ENCODE measurements at regions of chr22 and their contacts with region 1.

Region 1: GRCh38 chr22:40728731-40729189 is 49.5 kb downstream of the MCHR1 start:
- DNase-seq: peak; percentile 58 to 86 (median 70)
- ATAC-seq: peak; percentile 61
- H3K4me3 ChIP-seq: no peak overlapping the region
- H3K4me3 Mint-ChIP-seq: peak overlapping the region; percentile 73
- H3K27ac ChIP-seq: peak overlapping the region; percentile 64 to 71
- H3K27ac Mint-ChIP-seq: peak overlapping the region; percentile 93
- H3K4me1 ChIP-seq: peaks cover 72% of the 10 kb centered on the region
- H3K4me1 Mint-ChIP-seq: peaks cover 64% of the 10 kb centered on the region
- H3K27me3 ChIP-seq: no peaks in the 10 kb centered on the region
- H3K27me3 Mint-ChIP-seq: no peaks in the 10 kb centered on the region
- CTCF ChIP-seq: no peak

Region 2: DNA sequence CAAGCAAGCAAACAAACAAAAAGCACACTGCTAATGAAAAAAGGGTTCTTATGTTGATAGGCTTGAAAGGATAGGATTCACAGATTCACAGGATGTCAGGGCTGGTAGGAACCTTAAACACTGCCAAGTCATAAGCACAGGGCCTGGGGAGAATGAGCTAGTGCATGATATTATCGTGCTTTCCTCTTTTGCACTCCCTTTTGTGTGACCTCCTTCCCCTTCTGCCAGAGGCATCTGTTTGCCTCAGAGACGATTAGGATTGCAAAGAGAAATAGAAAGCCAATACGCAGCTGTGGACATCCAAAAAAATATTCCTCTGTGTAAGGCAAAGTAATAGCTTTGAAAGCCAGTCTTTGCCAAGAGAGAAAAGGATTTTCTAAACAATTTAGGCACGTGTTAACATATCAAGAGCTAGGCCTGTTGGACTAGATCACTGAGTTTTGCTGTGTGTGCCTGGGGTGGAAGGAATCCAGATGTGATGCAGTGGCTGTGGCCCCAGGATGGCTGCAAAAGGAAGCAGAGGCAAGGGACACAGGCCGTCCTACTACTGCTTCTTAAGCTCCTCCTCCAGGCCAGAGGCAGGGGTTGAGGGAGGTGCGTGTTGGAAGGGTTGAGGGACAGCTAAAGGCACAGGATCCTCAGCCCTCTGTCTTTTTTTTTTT is 18.9 kb before region 1 on chr22:
- CTCF ChIA-PET with region 1: interaction called, 5 read pairs
- POLR2A ChIA-PET with region 1: interaction called, 7 read pairs
- intact Hi-C with region 1: loop called in 1 of 2 experiments (anchors 2 kb)
- DNase-seq: no peak
- ATAC-seq: no peak
- H3K4me3 ChIP-seq: no peak overlapping the region
- H3K4me3 Mint-ChIP-seq: no peak overlapping the region
- H3K27ac ChIP-seq: no peak overlapping the region
- H3K27ac Mint-ChIP-seq: no peak overlapping the region
- H3K4me1 ChIP-seq: peaks cover 15% of the 10 kb centered on the region
- H3K4me1 Mint-ChIP-seq: peaks cover 16% of the 10 kb centered on the region
- H3K27me3 ChIP-seq: no peaks in the 10 kb centered on the region
- H3K27me3 Mint-ChIP-seq: no peaks in the 10 kb centered on the region
- CTCF ChIP-seq: no peak

Region 3: GRCh38 chr22:40764763-40765441 is 36.1 kb after region 1 on chr22:
- CTCF ChIA-PET with region 1: no interaction called
- POLR2A ChIA-PET with region 1: interaction called, 13 read pairs
- intact Hi-C with region 1: loop called in 1 of 2 experiments (anchors 5 kb)
- DNase-seq: peak in 10 of 14 experiments; percentile 5 to 65 (median 26)
- ATAC-seq: peak; percentile 81
- H3K4me3 ChIP-seq: no peak overlapping the region
- H3K4me3 Mint-ChIP-seq: peak overlapping the region; percentile 25
- H3K27ac ChIP-seq: peak overlapping the region; percentile 57 to 69
- H3K27ac Mint-ChIP-seq: peak overlapping the region; percentile 84
- H3K4me1 ChIP-seq: peaks cover 19% of the 10 kb centered on the region
- H3K4me1 Mint-ChIP-seq: peaks cover 23% of the 10 kb centered on the region
- H3K27me3 ChIP-seq: no peaks in the 10 kb centered on the region
- H3K27me3 Mint-ChIP-seq: no peaks in the 10 kb centered on the region
- CTCF ChIP-seq: no peak

Region 4: DNA sequence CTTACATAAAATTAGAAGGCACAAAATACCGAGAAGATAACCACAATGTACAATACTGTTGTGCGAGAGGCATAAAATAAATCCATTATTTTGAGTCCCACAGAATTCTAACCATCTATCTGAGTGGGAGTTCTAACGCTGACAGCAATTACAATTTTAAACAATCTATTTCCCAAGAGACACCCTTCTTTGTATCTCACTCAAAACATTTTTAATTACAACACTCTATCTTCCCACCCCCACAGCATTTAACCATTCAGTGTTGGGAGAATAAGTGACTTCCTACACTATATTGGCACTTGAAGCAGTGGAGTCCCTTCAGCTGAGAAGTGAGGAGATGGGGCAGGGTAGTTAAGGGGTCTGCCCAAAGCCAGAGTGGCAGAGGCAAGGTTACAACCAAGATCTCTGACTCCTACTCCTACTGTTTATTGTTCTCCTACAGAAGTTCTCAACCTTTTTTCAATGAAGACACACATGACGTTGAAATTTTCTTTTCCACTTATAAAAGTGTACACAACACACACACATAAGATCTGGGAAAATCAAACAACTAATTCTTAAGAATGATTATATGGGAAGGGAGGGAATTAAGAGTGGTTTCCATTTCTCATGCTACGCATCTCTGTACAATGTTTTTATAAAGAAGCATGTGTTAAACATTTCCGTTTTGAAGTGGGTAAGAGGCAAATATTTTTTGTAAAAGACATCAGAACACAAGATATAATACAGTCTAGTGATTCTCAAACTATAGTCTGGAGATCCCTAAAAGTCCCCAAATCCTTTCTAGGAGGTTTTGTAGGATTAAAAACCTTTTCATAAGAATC is 79.5 kb after region 1 on chr22:
- CTCF ChIA-PET with region 1: no interaction called
- POLR2A ChIA-PET with region 1: no interaction called
- intact Hi-C with region 1: no loop called
- DNase-seq: no peak
- ATAC-seq: no peak
- H3K4me3 ChIP-seq: no peak overlapping the region
- H3K4me3 Mint-ChIP-seq: no peak overlapping the region
- H3K27ac ChIP-seq: no peak overlapping the region
- H3K27ac Mint-ChIP-seq: no peak overlapping the region
- H3K4me1 ChIP-seq: no peaks in the 10 kb centered on the region
- H3K4me1 Mint-ChIP-seq: peaks cover 16% of the 10 kb centered on the region
- H3K27me3 ChIP-seq: no peaks in the 10 kb centered on the region
- H3K27me3 Mint-ChIP-seq: no peaks in the 10 kb centered on the region
- CTCF ChIP-seq: no peak

Measured in CD4-positive, alpha-beta T cell (primary cell).